CD8-positive, alpha-beta memory T cell (primary cell): ENCODE measurements at regions of chr11 and their contacts with region 1.

Region 1: DNA sequence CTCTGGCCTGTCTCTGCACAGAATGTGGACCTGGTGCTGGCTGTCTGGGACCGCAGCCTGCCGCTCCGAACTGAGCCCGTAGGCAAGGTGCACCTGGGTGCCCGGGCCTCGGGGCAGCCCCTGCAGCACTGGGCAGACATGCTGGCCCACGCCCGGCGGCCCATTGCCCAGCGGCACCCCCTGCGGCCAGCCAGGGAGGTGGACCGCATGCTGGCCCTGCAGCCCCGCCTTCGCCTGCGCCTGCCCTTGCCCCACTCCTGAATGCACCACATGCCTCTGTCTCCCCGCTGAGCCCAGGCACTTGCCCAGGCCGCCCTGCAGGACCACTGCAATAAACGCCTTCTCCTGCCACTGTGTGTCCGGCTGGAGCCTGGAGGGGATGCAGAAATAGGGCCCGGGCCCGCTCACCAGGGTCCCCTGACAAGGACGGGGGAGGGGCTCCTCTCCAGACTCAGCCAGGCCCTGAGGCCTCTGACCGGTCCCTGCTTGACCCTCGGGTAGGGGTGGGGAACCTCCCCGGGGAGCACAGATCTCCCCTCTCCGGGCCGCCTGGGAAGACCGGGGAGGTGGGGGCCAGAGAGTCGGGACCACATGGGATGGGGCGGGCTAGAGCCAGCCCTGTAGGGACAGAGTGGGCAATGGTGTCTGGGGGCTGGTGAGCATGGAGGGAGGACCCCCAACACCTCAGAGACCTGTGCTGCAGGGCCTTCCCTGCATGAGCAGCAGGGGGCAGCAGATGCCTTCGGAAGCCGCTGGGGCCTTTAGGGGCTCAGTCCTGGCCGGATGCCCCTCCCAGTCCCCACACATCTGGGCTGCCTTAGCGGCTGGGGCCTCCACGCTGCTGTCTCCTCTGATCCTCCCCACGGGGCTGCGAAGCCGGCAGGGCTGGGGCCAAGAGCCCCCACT is 1.4 kb upstream of the TNNI2 start:
- DNase-seq: peak; percentile 75 to 92 (median 80)
- H3K4me3 ChIP-seq: no peak overlapping the region
- H3K4me3 Mint-ChIP-seq: peak overlapping the region in 1 of 7 donors; percentile 34
- H3K27ac ChIP-seq: no peak overlapping the region
- H3K27ac Mint-ChIP-seq: peak overlapping the region in 1 of 8 donors; percentile 50
- H3K4me1 ChIP-seq: peaks cover 13% of the 10 kb centered on the region
- H3K4me1 Mint-ChIP-seq: peaks cover 6 to 23% (median 8%) of the 10 kb centered on the region in 3 donors
- H3K27me3 ChIP-seq: no peaks in the 10 kb centered on the region
- H3K27me3 Mint-ChIP-seq: peaks cover 3 to 6% of the 10 kb centered on the region in 2 donors

Region 2: DNA sequence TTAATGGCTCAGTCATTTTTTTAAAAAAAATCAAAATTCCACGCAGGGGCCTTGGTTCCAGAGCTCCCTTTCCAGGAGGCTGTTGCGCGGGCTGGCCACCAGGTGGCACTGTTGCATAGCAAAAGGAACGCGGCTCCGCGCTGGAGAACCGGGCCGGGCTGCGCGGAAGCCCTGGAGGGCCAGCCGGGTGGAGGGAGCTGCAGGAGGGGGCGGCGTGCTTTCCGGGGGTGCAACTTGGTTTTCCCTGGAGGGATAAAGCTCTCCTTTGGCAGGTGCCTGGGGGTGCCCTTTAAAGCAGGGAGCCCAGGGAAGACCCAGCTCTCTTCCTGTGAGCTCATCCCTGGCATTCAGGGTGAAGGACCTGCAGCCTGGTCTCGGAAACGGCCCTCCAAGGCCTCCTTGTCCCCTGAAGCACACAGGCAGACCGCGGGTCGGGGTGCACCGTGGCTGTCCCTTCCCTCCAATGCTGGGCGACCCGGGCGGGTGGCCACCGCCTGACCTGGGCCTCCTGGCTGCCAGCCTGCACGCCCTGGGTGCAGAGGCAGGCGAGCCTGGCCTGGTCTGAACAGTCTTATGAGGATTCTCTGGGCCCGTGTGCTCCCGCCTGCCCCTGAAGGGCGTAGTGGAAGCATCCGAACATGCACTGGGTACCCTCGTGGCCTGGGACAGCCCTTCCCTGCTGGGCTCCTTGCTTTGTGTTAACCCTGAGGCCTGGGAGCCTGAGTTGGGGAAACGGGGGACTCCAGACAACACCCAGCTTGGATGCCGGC is 184.5 kb before region 1 on chr11:
- CTCF ChIA-PET with region 1: interaction called, 36 read pairs
- POLR2A ChIA-PET with region 1: no interaction called
- DNase-seq: peak; percentile 65 to 82 (median 71)
- H3K4me3 ChIP-seq: no peak overlapping the region
- H3K4me3 Mint-ChIP-seq: no peak overlapping the region
- H3K27ac ChIP-seq: no peak overlapping the region
- H3K27ac Mint-ChIP-seq: no peak overlapping the region
- H3K4me1 ChIP-seq: no peaks in the 10 kb centered on the region
- H3K4me1 Mint-ChIP-seq: no peaks in the 10 kb centered on the region
- H3K27me3 ChIP-seq: peaks cover 13% of the 10 kb centered on the region
- H3K27me3 Mint-ChIP-seq: peaks cover 15 to 45% of the 10 kb centered on the region in 2 donors

Region 3: GRCh38 chr11:1776944-1777715 is 60.3 kb before region 1 on chr11:
- CTCF ChIA-PET with region 1: no interaction called
- POLR2A ChIA-PET with region 1: no interaction called
- DNase-seq: no peak
- H3K4me3 ChIP-seq: no peak overlapping the region
- H3K4me3 Mint-ChIP-seq: no peak overlapping the region
- H3K27ac ChIP-seq: no peak overlapping the region
- H3K27ac Mint-ChIP-seq: peak overlapping the region in 1 of 8 donors; percentile 75
- H3K4me1 ChIP-seq: peaks cover 6% of the 10 kb centered on the region
- H3K4me1 Mint-ChIP-seq: peaks cover 6 to 12% (median 9%) of the 10 kb centered on the region in 3 donors
- H3K27me3 ChIP-seq: no peaks in the 10 kb centered on the region
- H3K27me3 Mint-ChIP-seq: peaks cover 0 to 4% of the 10 kb centered on the region in 2 donors

Region 4: DNA sequence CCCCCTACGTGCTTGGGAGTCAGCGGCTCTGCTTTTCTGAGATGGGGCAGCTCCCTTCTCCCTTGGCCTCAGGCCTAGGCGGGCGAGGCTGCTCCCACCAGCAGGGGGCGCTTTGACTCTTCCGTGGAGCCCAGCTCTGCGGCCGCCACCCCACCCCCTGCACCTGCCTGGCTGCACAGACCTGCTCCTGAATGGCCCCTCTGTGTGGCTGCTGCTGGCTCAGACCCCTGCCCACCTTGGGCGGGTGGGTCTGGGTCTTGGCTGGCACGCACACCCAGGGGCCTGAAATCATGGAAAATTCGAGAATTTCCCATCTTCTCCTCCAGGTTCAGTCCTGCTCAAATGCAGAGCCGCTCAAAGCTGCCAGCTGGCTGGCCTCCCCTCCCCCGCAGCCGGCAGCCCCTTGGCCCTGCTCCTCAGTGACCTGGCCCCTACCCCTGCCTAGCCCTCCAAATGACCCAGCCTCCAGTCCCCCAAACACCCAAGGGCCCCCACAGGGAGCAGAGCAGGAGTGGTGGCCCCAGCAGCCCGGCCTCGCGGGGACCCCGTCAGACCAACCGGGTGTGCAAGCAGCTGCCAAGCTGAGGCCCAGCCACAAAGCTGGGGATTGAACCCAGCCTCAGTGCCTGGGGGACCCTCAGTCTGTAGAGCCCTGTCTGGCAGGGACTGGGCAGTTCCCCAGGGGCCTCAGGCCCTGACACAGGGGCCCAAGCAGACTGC is 45.3 kb after region 1 on chr11:
- CTCF ChIA-PET with region 1: interaction called, 13 read pairs
- POLR2A ChIA-PET with region 1: no interaction called
- DNase-seq: peak; percentile 59 to 83 (median 75)
- H3K4me3 ChIP-seq: no peak overlapping the region
- H3K4me3 Mint-ChIP-seq: no peak overlapping the region
- H3K27ac ChIP-seq: no peak overlapping the region
- H3K27ac Mint-ChIP-seq: peak overlapping the region in 1 of 8 donors; percentile 38
- H3K4me1 ChIP-seq: peaks cover 8% of the 10 kb centered on the region
- H3K4me1 Mint-ChIP-seq: peaks cover 3 to 33% (median 13%) of the 10 kb centered on the region in 3 donors
- H3K27me3 ChIP-seq: no peaks in the 10 kb centered on the region
- H3K27me3 Mint-ChIP-seq: no peaks in the 10 kb centered on the region

Region 5: GRCh38 chr11:2002807-2003206 is 165.4 kb after region 1 on chr11:
- CTCF ChIA-PET with region 1: interaction called, 40 read pairs
- POLR2A ChIA-PET with region 1: no interaction called
- DNase-seq: no peak
- H3K4me3 ChIP-seq: no peak overlapping the region
- H3K4me3 Mint-ChIP-seq: no peak overlapping the region
- H3K27ac ChIP-seq: no peak overlapping the region
- H3K27ac Mint-ChIP-seq: no peak overlapping the region
- H3K4me1 ChIP-seq: no peaks in the 10 kb centered on the region
- H3K4me1 Mint-ChIP-seq: no peaks in the 10 kb centered on the region
- H3K27me3 ChIP-seq: no peaks in the 10 kb centered on the region
- H3K27me3 Mint-ChIP-seq: no peaks in the 10 kb centered on the region